ENCODE measurements at regions of chr19 and their contacts with region 1.

Region 1: GRCh38 chr19:11587302-11587974 is 9.8 kb upstream of the ZNF627 start:
- DNase-seq: peak; percentile 57 to 82 (median 77)
- ATAC-seq: peak; percentile 100
- H3K4me3 ChIP-seq: no peak overlapping the region
- H3K4me3 Mint-ChIP-seq: no peak overlapping the region
- H3K27ac ChIP-seq: no peak overlapping the region
- H3K27ac Mint-ChIP-seq: no peak overlapping the region
- H3K4me1 ChIP-seq: no peaks in the 10 kb centered on the region
- H3K4me1 Mint-ChIP-seq: peaks cover 2% of the 10 kb centered on the region
- H3K27me3 ChIP-seq: no peaks in the 10 kb centered on the region
- H3K27me3 Mint-ChIP-seq: no peaks in the 10 kb centered on the region
- CTCF ChIP-seq: peak; percentile 85

Region 2: GRCh38 chr19:11242864-11243797 is 344.3 kb before region 1 on chr19:
- CTCF ChIA-PET with region 1: no interaction called
- POLR2A ChIA-PET with region 1: no interaction called
- intact Hi-C with region 1: loop called (anchors 2 to 5 kb)
- DNase-seq: peak; percentile 64 to 86 (median 81)
- ATAC-seq: peak; percentile 100
- H3K4me3 ChIP-seq: no peak overlapping the region
- H3K4me3 Mint-ChIP-seq: no peak overlapping the region
- H3K27ac ChIP-seq: no peak overlapping the region
- H3K27ac Mint-ChIP-seq: no peak overlapping the region
- H3K4me1 ChIP-seq: no peaks in the 10 kb centered on the region
- H3K4me1 Mint-ChIP-seq: peaks cover 5% of the 10 kb centered on the region
- H3K27me3 ChIP-seq: peaks cover 0 to 6% of the 10 kb centered on the region in 2 experiments
- H3K27me3 Mint-ChIP-seq: peaks cover 29% of the 10 kb centered on the region
- CTCF ChIP-seq: peak; percentile 56

Region 3: DNA sequence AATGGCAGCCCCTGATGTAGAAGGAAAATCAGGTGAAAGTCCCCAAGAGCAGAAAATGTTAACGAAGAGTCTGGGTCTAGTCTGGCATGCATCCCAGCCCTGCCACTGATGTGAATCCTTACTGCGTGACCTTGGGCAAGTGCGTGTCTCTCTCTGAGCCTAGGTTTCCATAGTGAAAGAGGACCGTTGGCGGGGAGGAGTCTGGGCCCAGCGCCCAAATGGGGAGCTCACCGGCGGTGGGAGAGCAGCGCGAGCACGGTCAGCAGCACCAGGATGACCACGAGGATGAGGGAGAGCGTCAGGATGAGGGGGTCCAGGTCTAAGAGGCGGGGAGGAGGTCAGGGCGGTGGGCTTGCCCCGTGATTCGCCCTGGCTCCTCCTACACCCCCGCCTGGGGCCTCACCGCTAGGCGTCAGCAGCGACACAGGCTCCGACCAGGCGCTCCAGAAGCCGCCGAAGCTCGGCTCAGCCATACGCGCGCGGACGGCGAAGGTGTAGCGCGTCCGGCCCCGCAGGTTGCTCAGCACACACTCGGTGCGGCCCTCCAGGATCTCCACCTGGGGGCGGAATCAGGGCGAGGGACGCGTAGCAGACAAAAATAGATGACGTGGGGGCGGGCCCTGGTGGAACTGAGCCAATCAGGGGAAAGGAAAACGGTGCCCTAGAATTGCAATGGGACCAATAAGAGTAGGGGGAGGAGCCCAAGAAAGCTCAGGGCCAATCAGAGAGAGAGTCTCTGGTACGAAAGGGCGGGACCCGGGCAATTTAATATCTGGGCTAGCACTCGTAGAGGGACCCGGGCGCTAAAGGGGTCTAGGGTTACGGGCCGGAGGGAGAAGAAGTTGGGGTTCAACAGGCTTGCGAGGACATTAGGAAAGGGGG is 206.5 kb before region 1 on chr19:
- CTCF ChIA-PET with region 1: no interaction called
- POLR2A ChIA-PET with region 1: no interaction called
- intact Hi-C with region 1: loop called in 1 of 2 experiments (anchors 1 kb)
- DNase-seq: peak; percentile 93 to 99 (median 96)
- ATAC-seq: peak; percentile 83
- H3K4me3 ChIP-seq: peak overlapping the region; percentile 64 to 72
- H3K4me3 Mint-ChIP-seq: peak overlapping the region; percentile 94
- H3K27ac ChIP-seq: peak overlapping the region; percentile 80 to 89
- H3K27ac Mint-ChIP-seq: peak overlapping the region; percentile 99
- H3K4me1 ChIP-seq: peaks cover 47% of the 10 kb centered on the region
- H3K4me1 Mint-ChIP-seq: peaks cover 45% of the 10 kb centered on the region
- H3K27me3 ChIP-seq: peaks cover 6 to 23% of the 10 kb centered on the region in 2 experiments
- H3K27me3 Mint-ChIP-seq: peaks cover 19% of the 10 kb centered on the region
- CTCF ChIP-seq: peak; percentile 88

Region 4: DNA sequence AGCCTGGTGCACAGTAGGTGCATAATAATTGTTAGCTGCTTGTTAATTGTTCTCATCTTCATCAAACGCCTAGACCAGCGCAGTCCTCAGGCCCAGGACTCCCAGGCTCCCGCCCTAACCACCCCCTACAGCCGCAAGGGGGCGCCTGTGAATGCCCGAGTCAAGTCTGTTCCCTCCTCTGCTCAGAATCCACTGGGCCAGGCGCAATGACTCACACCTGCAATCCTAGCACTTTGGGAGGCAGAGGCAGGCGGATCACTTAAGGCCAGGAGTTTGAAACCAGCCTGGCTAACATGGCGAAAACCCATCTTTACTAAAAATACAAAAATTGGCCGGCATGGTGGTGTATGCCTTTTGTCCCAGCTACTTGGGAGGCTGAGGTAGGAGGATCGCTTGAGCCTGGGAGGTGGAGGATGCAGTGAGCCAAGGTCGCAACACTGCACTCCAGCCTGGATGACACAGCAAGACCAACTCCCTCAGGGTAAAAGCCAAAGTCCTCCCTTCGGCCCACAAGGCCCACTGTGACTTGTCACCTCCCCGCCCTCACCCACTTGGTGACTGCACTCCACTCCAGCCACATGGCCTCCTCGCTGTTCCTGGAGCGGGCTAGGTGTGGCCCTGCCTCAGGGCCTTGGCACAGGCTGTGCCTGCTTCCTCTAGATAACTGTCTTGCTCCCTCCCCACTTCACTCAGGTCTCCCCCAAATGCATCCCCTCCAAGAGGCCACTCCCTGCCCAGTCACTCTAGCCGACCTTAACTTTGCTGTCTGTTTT is 90.9 kb before region 1 on chr19:
- CTCF ChIA-PET with region 1: interaction called, 3 read pairs
- POLR2A ChIA-PET with region 1: no interaction called
- intact Hi-C with region 1: loop called (anchors 1 kb)
- DNase-seq: peak; percentile 18 to 70 (median 61)
- ATAC-seq: peak; percentile 69
- H3K4me3 ChIP-seq: no peak overlapping the region
- H3K4me3 Mint-ChIP-seq: no peak overlapping the region
- H3K27ac ChIP-seq: no peak overlapping the region
- H3K27ac Mint-ChIP-seq: no peak overlapping the region
- H3K4me1 ChIP-seq: no peaks in the 10 kb centered on the region
- H3K4me1 Mint-ChIP-seq: no peaks in the 10 kb centered on the region
- H3K27me3 ChIP-seq: no peaks in the 10 kb centered on the region
- H3K27me3 Mint-ChIP-seq: no peaks in the 10 kb centered on the region
- CTCF ChIP-seq: peak; percentile 63

Region 5: GRCh38 chr19:11558881-11559828 is 28.3 kb before region 1 on chr19 and contains the start of gene ELOF1:
- CTCF ChIA-PET with region 1: interaction called, 22 read pairs
- POLR2A ChIA-PET with region 1: no interaction called
- intact Hi-C with region 1: loop called (anchors 1 kb)
- DNase-seq: peak; percentile 90 to 99 (median 97)
- ATAC-seq: peak; percentile 94
- H3K4me3 ChIP-seq: peak within 1 kb of the TSS; percentile 83 to 87
- H3K4me3 Mint-ChIP-seq: peak within 1 kb of the TSS; percentile 93
- H3K27ac ChIP-seq: peak within 1 kb of the TSS; percentile 74 to 78
- H3K27ac Mint-ChIP-seq: peak within 1 kb of the TSS; percentile 93
- H3K4me1 ChIP-seq: peaks cover 29% of the 10 kb centered on the region
- H3K4me1 Mint-ChIP-seq: peaks cover 39% of the 10 kb centered on the region
- H3K27me3 ChIP-seq: no peaks in the 10 kb centered on the region
- H3K27me3 Mint-ChIP-seq: no peaks in the 10 kb centered on the region
- CTCF ChIP-seq: no peak
- total RNA-seq, gene ELOF1: 40.3 to 41.0 TPM

Measured in CD8-positive, alpha-beta T cell (primary cell).